ENCODE measurements at regions of chr1 and their contacts with region 1.

Region 1: GRCh38 chr1:77900687-77901293 is 12.4 kb downstream of the NEXN start:
- DNase-seq: no peak
- ATAC-seq: peak; percentile 49

Region 2: GRCh38 chr1:78121710-78122109 is 220.9 kb after region 1 on chr1:
- intact Hi-C with region 1: loop called (anchors 5 kb)
- DNase-seq: no peak
- ATAC-seq: no peak

Measured in Right ventricle myocardium inferior (tissue), 1 donor.